ENCODE measurements at regions of chr12 and their contacts with region 1.

Region 1: GRCh38 chr12:32365473-32366064 is 33.8 kb upstream of the FGD4 start:
- DNase-seq: no peak
- H3K4me3 ChIP-seq: no peak overlapping the region
- H3K27ac ChIP-seq: no peak overlapping the region
- H3K4me1 ChIP-seq: no peaks in the 10 kb centered on the region
- H3K27me3 ChIP-seq: no peaks in the 10 kb centered on the region
- CTCF ChIP-seq: peak; percentile 29 to 70 (median 37)
- POLR2A ChIP-seq: no peak

Region 2: GRCh38 chr12:32302218-32303173 is 63.1 kb before region 1 on chr12:
- intact Hi-C with region 1: no loop called
- DNase-seq: no peak
- H3K4me3 ChIP-seq: no peak overlapping the region
- H3K27ac ChIP-seq: no peak overlapping the region
- H3K4me1 ChIP-seq: no peaks in the 10 kb centered on the region
- H3K27me3 ChIP-seq: no peaks in the 10 kb centered on the region
- CTCF ChIP-seq: peak in 1 of 3 experiments; percentile 7
- POLR2A ChIP-seq: no peak

Region 3: GRCh38 chr12:32644431-32644830 is 278.9 kb after region 1 on chr12:
- intact Hi-C with region 1: loop called (anchors 5 kb)
- DNase-seq: no peak
- H3K4me3 ChIP-seq: no peak overlapping the region
- H3K27ac ChIP-seq: no peak overlapping the region
- H3K4me1 ChIP-seq: no peaks in the 10 kb centered on the region
- H3K27me3 ChIP-seq: no peaks in the 10 kb centered on the region
- CTCF ChIP-seq: no peak
- POLR2A ChIP-seq: no peak